ENCODE measurements at regions of chr1 and their contacts with region 1.

Region 1: DNA sequence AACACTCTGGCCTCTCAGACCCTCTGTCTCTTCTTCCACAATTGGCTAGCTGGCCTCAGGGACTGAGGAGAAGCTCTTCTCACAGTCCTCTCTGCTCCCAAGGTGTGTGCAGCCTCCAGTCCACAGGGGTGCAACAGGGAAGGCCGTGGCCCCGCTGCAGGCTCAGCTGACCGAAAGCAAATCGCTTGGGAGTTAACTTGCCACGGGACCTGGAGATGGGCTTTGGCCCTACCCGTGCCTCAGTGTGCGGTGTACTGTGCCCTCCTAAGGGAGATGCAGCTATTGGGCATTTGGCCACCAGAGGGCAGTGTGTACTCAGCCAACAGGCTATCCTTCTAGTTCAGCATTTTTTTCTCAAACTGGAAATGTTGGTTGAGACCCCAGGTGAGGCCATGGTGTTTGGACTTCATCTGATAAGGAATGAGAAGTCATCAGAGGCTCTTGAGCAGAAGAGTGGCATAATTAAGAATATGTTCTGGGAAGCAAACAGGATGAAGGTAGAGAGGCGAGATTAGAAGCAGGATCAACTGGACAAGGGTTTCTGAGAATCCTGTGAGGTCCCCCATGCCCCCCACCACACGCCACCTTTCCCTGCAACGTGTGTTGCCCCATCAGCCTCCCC is 42.5 kb upstream of the TMEM125 start:
- DNase-seq: peak; percentile 66
- ATAC-seq: peak; percentile 97
- H3K4me3 ChIP-seq: no peak overlapping the region
- H3K27ac ChIP-seq: no peak overlapping the region
- H3K4me1 ChIP-seq: peaks cover 0 to 20% of the 10 kb centered on the region in 2 experiments; a peak in 2 of 4 replicates
- H3K27me3 ChIP-seq: no peaks in the 10 kb centered on the region
- CTCF ChIP-seq: peak; percentile 86 to 96 (median 89)
- POLR2A ChIP-seq: no peak
- RAD21 ChIP-seq: peak; percentile 99

Region 2: DNA sequence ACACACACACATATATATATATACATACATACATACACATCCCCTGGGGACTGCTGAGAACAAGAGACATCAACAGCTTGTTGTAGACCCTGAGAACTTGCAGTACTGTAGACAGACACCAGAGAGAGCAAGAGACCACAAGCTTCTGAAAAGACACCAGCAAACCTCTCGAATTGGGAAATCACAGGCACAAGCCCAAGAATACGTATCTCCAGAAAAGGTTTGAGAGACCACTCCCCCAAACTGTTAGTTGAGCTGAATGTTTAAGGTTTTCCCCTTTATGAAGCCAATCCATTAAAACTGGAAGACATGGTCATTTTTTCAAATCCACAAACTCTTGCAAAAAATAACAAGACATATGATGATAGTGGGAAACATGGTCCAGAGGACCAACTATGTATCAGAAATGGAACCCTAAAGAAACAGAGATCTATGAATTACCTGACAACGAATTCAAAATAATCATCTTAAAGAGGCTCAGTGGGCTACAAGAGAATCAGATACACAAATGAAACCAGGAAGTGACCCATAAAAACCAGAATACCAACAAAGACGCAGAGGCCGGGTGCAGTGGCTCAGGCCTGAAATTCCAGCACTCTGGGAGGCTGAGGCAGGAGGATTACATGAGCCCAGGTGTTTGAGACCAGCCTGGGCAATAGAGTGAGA is 313.7 kb before region 1 on chr1:
- CTCF ChIA-PET with region 1: interaction called, 11 read pairs
- POLR2A ChIA-PET with region 1: no interaction called
- RAD21 ChIA-PET with region 1: interaction called in 1 of 2 experiments, 3 read pairs
- intact Hi-C with region 1: no loop called
- DNase-seq: peak; percentile 78
- ATAC-seq: peak; percentile 96
- H3K4me3 ChIP-seq: no peak overlapping the region
- H3K27ac ChIP-seq: no peak overlapping the region
- H3K4me1 ChIP-seq: peaks cover 0 to 3% of the 10 kb centered on the region in 2 experiments; a peak in 1 of 4 replicates
- H3K27me3 ChIP-seq: no peaks in the 10 kb centered on the region
- CTCF ChIP-seq: peak; percentile 73 to 84 (median 77)
- POLR2A ChIP-seq: no peak
- RAD21 ChIP-seq: peak; percentile 91

Region 3: DNA sequence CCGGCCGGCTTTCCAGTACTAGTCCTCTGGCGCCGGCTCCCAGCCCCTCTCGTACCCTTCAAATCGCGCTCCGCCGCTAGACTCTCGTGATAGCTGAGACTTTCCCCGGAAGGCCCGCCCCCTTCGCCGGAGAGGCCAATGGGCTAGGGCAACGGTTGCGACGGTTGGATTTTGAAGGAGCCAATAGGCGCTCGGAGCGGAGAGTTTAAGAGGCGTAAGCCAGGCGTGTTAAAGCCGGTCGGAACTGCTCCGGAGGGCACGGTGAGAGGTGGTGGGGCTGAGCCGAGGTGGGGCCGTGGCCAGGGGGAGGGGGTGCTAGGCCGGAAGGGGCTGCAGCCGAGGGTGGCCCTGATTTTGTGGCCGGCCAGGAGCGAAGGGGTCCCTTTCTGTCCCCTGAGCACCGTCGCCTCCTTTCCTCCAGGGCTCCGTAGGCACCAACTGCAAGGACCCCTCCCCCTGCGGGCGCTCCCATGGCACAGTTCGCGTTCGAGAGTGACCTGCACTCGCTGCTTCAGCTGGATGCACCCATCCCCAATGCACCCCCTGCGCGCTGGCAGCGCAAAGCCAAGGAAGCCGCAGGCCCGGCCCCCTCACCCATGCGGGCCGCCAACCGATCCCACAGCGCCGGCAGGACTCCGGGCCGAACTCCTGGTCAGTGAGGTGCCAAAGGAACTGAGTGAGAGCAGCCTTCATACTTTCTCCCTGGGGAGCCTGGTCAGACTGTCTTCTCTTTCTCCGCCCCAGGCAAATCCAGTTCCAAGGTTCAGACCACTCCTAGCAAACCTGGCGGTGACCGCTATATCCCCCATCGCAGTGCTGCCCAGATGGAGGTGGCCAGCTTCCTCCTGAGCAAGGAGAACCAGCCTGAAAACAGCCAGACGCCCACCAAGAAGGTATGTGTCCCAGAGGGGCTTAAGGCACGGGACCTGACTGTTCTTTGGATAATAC is 131.8 kb after region 1 on chr1 and contains the start of gene CDC20:
- CTCF ChIA-PET with region 1: interaction called, 12 read pairs
- POLR2A ChIA-PET with region 1: interaction called, 5 read pairs
- RAD21 ChIA-PET with region 1: no interaction called
- intact Hi-C with region 1: no loop called
- DNase-seq: peak; percentile 96
- ATAC-seq: peak; percentile 92
- H3K4me3 ChIP-seq: peak within 1 kb of the TSS; percentile 76 to 91
- H3K27ac ChIP-seq: peak within 1 kb of the TSS; percentile 80
- H3K4me1 ChIP-seq: peaks cover 13 to 53% of the 10 kb centered on the region in 2 experiments
- H3K27me3 ChIP-seq: no peaks in the 10 kb centered on the region
- CTCF ChIP-seq: no peak
- POLR2A ChIP-seq: peak; percentile 76
- RAD21 ChIP-seq: no peak
- total RNA-seq, gene CDC20: 355 TPM

Region 4: DNA sequence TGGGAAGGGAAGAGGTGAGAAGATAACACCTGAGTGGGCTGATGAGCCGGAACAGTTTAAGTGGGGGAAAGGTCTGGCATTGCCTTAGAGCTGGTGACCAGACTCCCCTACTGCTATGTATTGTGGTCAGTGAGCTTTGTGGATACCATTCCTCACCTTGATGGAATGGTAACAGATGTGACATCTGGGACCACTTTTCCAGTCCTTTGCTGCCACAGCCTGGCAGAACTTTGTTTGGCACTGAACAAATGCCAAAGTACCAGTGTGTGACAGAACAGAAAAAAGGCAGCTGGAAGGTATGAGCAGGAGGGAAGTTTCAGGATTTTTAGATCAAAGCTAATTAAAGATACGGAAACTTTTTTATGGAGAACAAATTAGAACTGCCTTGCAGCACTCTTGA is 156.2 kb after region 1 on chr1:
- CTCF ChIA-PET with region 1: interaction called, 12 read pairs
- POLR2A ChIA-PET with region 1: no interaction called
- RAD21 ChIA-PET with region 1: interaction called in 1 of 2 experiments, 3 read pairs
- intact Hi-C with region 1: loop called (anchors 1 kb)
- DNase-seq: no peak
- ATAC-seq: peak; percentile 67
- H3K4me3 ChIP-seq: no peak overlapping the region
- H3K27ac ChIP-seq: no peak overlapping the region
- H3K4me1 ChIP-seq: peaks cover under 1 to 3% of the 10 kb centered on the region in 2 experiments; a peak in 3 of 4 replicates
- H3K27me3 ChIP-seq: no peaks in the 10 kb centered on the region
- CTCF ChIP-seq: peak; percentile 43 to 49 (median 45); a peak in 4 of 6 replicates
- POLR2A ChIP-seq: no peak
- RAD21 ChIP-seq: peak; percentile 79

Region 5: DNA sequence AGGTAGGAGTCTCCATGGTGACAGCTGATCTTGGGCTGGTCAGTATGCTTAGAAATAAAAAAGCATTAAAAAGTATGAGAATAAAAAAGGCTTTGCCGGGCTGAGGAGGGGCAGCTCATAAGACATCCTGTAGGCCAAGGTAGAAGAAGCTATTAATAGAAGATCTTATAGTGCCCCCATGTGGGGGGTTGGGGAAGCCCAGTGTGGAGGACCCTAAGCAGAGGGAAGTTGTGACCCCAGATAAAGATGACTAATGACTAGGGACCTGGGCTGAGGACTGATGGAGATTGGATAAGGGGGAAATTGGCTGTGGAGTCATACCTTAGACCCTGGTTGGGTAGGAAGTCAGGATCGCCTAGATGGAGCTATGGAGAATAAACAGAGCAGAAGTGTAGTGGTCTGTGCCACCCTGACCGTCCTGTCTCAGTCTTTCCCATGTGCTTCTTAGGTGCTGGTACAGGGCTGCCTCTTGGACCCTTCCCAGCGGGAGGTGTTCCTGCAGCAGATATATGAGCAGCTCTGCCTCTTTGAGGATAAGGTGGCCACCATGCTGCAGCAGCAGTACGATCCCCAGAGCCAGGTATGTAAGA is 187.5 kb after region 1 on chr1:
- CTCF ChIA-PET with region 1: interaction called, 51 read pairs
- POLR2A ChIA-PET with region 1: no interaction called
- RAD21 ChIA-PET with region 1: interaction called, 8 to 13 read pairs
- intact Hi-C with region 1: loop called (anchors 1 kb)
- DNase-seq: peak; percentile 48
- ATAC-seq: peak; percentile 96
- H3K4me3 ChIP-seq: no peak overlapping the region
- H3K27ac ChIP-seq: no peak overlapping the region
- H3K4me1 ChIP-seq: no peaks in the 10 kb centered on the region
- H3K27me3 ChIP-seq: no peaks in the 10 kb centered on the region
- CTCF ChIP-seq: peak; percentile 69 to 77 (median 74); a peak in 5 of 6 replicates
- POLR2A ChIP-seq: no peak
- RAD21 ChIP-seq: peak; percentile 89

Region 6: DNA sequence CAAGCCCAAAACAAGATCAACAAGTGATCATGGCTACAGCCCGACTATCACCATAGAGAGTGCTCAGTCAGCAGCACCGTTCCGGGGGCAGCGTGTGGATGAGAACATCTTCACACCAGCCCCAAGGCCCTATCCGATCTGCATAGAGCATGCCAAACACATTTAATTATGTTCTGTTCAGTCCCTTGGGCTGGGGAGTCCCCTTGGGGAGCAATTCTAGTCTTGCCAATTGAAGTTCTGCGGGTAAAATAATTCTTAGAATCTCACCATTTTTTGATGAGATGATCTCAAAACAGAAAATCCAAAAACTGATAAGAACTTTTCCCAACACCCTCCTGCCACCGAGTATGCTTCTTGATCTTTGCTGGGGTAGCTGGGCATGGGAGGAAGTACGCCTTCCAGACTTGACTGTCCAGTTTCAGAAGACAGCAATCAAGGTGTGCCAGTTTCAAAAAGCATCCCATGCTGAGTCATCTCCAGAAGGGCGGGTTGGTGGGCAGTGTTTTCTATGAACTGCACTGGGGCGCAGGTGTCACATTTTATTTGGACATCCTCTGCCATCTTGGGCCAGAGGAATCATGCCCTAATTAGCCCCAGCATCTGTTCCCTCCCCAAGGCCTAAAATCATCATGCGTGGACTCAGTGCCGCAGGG is 282.6 kb after region 1 on chr1:
- CTCF ChIA-PET with region 1: no interaction called
- POLR2A ChIA-PET with region 1: no interaction called
- RAD21 ChIA-PET with region 1: no interaction called
- intact Hi-C with region 1: no loop called
- DNase-seq: no peak
- ATAC-seq: peak; percentile 77
- H3K4me3 ChIP-seq: peak overlapping the region in 1 of 2 experiments; percentile 4; a peak in 1 of 4 replicates
- H3K27ac ChIP-seq: no peak overlapping the region
- H3K4me1 ChIP-seq: peaks cover 9 to 23% of the 10 kb centered on the region in 2 experiments; a peak in 3 of 4 replicates
- H3K27me3 ChIP-seq: no peaks in the 10 kb centered on the region
- CTCF ChIP-seq: no peak
- POLR2A ChIP-seq: no peak
- RAD21 ChIP-seq: no peak

Region 7: GRCh38 chr1:43529206-43529731 is 302.0 kb after region 1 on chr1:
- CTCF ChIA-PET with region 1: interaction called, 4 read pairs
- POLR2A ChIA-PET with region 1: no interaction called
- RAD21 ChIA-PET with region 1: no interaction called
- intact Hi-C with region 1: loop called (anchors 10 kb)
- DNase-seq: peak; percentile 84
- ATAC-seq: peak; percentile 56
- H3K4me3 ChIP-seq: no peak overlapping the region
- H3K27ac ChIP-seq: no peak overlapping the region
- H3K4me1 ChIP-seq: peaks cover 26 to 71% of the 10 kb centered on the region in 2 experiments
- H3K27me3 ChIP-seq: no peaks in the 10 kb centered on the region
- CTCF ChIP-seq: peak in 2 of 3 experiments; percentile 94 to 97; a peak in 4 of 6 replicates
- POLR2A ChIP-seq: no peak
- RAD21 ChIP-seq: no peak

Region 8: DNA sequence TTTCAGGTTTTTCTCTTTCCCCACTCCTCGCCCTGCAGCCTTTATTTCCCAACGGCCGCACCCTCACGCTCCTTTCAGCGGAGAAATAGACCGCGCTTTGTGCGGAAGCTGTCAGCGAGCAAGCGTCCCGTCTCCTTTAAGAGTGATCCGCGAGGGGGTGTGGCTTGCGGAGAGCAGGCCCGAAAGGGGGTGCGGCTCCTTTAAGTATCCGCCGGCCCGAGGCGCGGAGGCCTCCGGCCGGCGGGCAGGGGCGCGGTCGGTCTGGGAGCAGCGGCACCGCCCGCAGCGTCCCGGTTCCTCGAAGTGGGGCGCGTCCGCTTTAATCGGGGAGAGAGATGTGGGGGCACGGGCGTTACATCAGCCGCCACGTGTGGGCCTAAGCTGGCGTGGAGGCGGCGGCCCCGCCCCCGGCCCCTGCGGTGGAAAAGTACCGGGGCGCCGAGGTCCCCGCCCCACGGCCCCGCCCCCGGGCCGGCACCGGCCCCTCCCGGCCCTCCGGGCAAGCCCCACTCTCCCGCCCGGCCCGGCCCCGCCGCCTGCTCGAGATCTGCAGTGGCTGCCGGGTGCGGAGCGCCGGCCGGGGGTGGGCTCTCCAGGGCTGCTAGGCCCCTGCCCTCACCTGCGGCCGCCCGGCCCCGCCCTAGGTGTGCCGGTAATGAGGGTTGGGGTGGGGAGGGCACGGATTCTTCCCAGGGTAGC is 802.8 kb after region 1 on chr1:
- CTCF ChIA-PET with region 1: no interaction called
- POLR2A ChIA-PET with region 1: no interaction called
- RAD21 ChIA-PET with region 1: no interaction called
- intact Hi-C with region 1: loop called (anchors 10 kb)
- DNase-seq: peak; percentile 86
- ATAC-seq: peak; percentile 78
- H3K4me3 ChIP-seq: peak overlapping the region; percentile 68 to 86
- H3K27ac ChIP-seq: peak overlapping the region; percentile 91
- H3K4me1 ChIP-seq: peaks cover 32 to 46% of the 10 kb centered on the region in 2 experiments
- H3K27me3 ChIP-seq: no peaks in the 10 kb centered on the region
- CTCF ChIP-seq: no peak
- POLR2A ChIP-seq: peak; percentile 17
- RAD21 ChIP-seq: no peak